ENCODE measurements at regions of chr1 and their contacts with region 1.

Region 1: DNA sequence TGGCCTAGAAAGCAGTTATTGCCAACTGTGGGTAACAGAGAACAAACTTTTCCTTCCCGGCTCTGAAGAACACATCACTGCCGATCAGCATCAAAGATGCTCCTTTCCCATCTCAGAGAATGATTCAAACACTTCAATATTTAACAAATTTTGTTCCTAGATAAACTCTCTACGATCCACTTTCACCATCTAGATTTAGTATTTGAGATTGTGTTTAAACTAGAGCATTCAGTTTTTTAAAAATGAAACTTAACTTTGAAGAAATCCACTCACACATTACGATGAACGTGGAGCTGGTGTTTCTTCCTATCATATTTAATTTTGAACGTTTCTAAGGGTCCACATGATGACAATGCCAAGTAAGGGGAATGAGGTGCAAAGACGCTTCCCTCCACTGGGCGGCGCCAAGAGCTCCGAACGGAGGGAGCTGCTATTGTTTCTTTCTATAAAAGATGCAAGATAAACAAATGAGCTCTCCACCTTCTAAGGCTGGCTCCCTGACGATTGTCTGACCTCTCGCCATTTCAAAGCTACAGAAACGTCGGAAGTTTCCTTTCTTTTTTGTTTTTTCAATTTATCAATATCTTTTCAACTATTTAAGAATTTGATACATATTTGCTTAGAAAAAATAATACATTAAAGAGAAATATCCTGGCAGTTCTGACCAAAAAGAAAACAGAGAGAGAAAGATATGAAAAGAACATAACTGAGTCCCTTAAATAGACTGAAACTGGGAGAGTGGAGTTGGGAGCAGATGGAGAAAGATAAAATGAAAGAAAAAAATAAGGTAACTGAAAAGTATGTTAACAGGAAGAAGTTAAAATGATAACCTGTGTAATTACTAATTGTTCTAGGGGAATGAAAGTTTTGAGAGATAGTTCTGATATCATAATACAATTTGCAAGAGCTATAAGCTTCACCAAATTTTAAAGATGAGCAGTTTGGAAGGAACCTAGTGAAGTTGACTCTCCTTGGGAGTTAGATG is 4.4 kb upstream of the BARHL2 start:
- DNase-seq: no peak
- ATAC-seq: no peak
- H3K4me3 ChIP-seq: no peak overlapping the region
- H3K27ac ChIP-seq: no peak overlapping the region
- H3K4me1 ChIP-seq: peaks cover 29% of the 10 kb centered on the region
- H3K27me3 ChIP-seq: peaks cover 2 to 97% (median 81%) of the 10 kb centered on the region in 3 donors
- CTCF ChIP-seq: peak; percentile 68

Region 2: GRCh38 chr1:90731382-90732050 is 10.0 kb after region 1 on chr1:
- intact Hi-C with region 1: no loop called
- DNase-seq: no peak
- ATAC-seq: no peak
- H3K4me3 ChIP-seq: no peak overlapping the region
- H3K27ac ChIP-seq: no peak overlapping the region
- H3K4me1 ChIP-seq: peaks cover 12% of the 10 kb centered on the region
- H3K27me3 ChIP-seq: peaks cover 7 to 94% (median 27%) of the 10 kb centered on the region in 3 donors
- CTCF ChIP-seq: no peak

Region 3: DNA sequence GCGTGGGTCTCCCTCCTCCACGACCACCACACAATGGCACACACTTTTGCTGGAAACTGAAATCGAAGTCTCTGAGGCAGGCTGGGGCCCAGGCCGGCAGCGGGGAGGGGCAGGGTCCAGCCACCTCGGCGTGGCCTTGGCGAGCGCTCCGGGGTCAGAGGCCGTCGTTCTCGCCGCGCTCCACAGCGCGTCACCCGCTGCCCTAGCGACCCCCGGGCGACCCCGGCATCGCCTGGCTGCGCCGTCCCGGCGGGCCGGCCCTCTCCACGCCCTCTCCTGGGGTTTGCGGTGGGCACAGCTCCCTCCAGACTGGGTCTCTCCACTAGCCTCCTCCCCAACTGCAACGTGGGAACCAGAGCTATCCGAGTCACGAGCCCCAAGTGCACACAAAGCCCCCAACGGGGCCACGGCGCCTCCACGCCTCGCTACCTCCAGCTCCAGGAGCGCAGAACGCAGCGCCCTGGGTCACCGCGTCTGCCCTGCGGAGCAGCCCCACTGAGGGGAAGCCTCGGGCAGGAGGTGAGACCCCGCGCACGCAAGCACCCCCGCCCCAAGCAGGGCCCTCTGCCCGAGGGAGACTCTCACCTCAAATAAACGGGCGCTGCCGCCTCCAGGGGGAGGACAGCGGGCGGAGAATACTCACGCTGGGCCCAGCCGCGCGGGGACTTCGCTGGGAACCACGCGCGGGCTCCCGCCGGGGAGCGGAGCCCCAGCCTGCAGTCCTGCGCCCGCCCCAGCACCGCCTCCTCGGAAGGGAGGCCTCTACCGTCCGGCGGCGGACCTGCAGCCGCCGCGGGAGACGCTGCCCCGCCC is 129.6 kb after region 1 on chr1:
- intact Hi-C with region 1: loop called in 1 of 2 experiments (anchors 10 kb)
- DNase-seq: peak; percentile 85 to 91
- ATAC-seq: peak; percentile 96 to 99 (median 98)
- H3K4me3 ChIP-seq: peak overlapping the region; percentile 98
- H3K27ac ChIP-seq: peak overlapping the region; percentile 46
- H3K4me1 ChIP-seq: peaks cover 9% of the 10 kb centered on the region
- H3K27me3 ChIP-seq: no peaks in the 10 kb centered on the region
- CTCF ChIP-seq: peak; percentile 82

Region 4: DNA sequence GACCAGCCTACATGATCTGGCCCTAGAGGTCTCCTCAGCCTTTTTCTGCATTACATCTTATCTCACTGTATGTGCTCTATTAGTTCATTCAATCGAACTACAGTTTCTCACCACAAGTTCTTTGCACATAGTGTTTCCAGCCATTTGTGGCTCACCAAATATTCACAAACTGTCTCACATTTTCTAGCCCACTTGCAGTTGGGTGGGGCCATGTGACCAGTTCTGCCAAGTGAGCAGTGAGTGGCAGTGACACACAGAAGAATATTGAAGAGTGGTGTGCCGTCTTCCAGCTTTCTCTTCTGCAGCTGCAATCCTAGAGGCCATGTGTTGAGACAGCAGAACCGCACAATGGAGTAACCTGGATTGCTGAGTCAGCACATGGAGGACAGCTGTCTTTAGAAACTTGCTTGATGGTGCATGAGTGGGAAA is 403.5 kb after region 1 on chr1:
- intact Hi-C with region 1: no loop called
- DNase-seq: no peak
- ATAC-seq: no peak
- H3K4me3 ChIP-seq: no peak overlapping the region
- H3K27ac ChIP-seq: no peak overlapping the region
- H3K4me1 ChIP-seq: no peaks in the 10 kb centered on the region
- H3K27me3 ChIP-seq: no peaks in the 10 kb centered on the region
- CTCF ChIP-seq: no peak

Region 5: GRCh38 chr1:91189096-91189495 is 467.6 kb after region 1 on chr1:
- intact Hi-C with region 1: no loop called
- DNase-seq: no peak
- ATAC-seq: no peak
- H3K4me3 ChIP-seq: no peak overlapping the region
- H3K27ac ChIP-seq: no peak overlapping the region
- H3K4me1 ChIP-seq: no peaks in the 10 kb centered on the region
- H3K27me3 ChIP-seq: no peaks in the 10 kb centered on the region
- CTCF ChIP-seq: no peak

Measured in psoas muscle (tissue), 8 donors.